OCI-LY7 (cell line): ENCODE measurements at regions of chr17 and their contacts with region 1.

Region 1: DNA sequence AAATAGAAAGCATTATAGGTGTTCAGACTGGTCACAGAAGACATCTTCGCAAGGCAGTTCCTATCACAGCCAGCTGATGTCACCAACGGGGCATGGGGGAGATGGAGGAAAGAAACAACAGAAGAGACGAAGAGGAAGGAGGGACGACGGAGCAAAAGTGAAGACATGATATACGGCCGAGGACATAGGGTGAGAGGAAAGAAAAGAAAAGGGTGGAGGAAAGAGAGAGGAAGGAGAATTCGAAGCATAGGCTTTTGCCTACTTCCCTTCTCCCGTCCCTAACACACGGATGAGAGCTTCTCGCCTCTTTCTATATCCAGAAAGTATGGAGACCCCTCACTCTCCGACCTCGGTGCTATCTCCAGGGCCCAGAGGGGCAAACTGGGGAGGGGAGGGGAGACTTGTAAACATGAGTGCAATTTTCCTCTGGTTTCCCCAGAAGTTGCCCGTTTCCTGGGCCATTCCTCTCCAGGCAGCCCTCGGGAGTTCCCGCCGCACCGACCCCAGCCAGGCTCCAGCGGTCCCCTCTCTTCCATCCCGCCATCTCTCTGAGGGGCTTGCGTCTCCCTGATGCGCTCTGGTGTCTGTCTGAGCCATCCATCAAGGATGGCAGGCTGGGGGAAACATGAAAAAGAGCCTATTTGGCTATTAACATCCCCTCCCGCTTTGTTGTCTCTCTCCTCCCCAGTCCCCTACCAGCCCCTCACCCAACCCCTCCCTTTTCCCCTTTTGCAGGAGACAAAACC is 26.0 kb downstream of the COPZ2 start:
- DNase-seq: peak; percentile 79
- H3K4me3 ChIP-seq: peak overlapping the region; percentile 66
- H3K27ac ChIP-seq: peak overlapping the region; percentile 7
- H3K4me1 ChIP-seq: peaks cover 19% of the 10 kb centered on the region
- CTCF ChIP-seq: peak; percentile 85

Region 2: DNA sequence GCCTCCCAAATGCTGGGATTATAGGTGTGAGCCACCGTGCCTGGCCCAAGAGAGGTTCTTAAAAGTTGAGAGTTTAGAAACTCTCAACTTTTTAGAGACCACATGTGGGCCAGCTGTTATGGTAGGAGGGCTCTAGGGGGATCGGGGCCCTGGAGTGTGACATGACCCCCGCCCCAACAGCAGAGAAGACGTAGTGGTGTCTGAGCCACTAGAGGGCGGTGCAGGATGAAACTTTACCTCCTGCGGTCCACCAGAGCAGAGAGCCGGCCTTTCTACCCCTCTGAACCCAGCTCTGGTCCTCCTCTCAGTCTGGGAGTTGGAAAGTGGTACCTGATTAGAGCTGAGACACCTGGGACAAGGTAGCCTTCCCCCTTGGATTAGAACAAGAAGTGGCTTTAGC is 33.3 kb before region 1 on chr17:
- CTCF ChIA-PET with region 1: no interaction called
- POLR2A ChIA-PET with region 1: no interaction called
- intact Hi-C with region 1: loop called (anchors 2 kb)
- DNase-seq: peak; percentile 70
- H3K4me3 ChIP-seq: no peak overlapping the region
- H3K27ac ChIP-seq: no peak overlapping the region
- H3K4me1 ChIP-seq: no peaks in the 10 kb centered on the region
- CTCF ChIP-seq: peak; percentile 84